ENCODE measurements at regions of chr2 and their contacts with region 1.

Region 1: DNA sequence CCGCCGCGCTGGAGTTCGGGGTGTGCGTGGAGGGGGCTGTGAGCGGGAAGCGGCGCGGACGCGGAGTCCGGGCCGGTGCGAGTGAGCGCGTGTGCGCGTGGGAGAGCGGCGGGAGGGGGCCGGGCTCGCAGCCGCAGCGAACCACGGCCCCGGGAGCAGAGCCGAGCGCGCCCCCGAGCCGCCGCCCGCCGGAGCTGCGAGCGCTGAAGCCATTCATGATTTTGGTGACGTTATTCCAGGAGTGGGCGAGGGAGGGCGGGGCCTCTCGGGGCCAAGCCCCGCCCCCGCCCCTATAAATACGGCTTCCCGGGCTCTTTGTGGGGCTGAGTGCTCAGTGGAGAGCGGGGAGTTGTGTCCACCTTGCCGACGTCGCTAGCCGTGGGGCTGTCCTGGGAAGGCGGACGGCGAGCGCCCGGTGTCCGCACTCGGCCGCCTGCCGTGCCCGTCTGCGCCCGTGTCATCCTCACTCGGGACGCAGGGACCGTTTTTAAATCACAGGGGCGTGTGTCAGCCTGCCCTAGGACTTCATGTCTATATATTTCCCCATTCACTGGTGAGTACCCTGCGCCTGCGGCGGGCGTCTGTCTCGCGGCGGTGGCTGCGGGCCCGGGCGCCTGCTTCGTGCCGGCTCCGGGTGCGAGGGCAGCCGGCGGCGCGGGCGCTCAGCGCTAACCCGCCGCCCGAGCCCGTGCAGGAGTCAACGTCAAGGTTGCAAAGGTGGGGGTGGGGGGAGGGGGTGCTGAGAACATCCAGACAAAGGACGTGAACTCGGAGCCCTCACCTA is at the start of gene LBH:
- DNase-seq: peak; percentile 87 to 88
- ATAC-seq: peak; percentile 59 to 68
- H3K4me3 ChIP-seq: peak within 1 kb of the TSS; percentile 97
- H3K27ac ChIP-seq: peak within 1 kb of the TSS; percentile 92 to 94
- H3K4me1 ChIP-seq: peaks cover 33% of the 10 kb centered on the region
- CTCF ChIP-seq: 0 out of 3 replicates have a peak, but pooled peaks have one; percentile 11
- EP300 ChIP-seq: no peak
- POLR2A ChIP-seq: peak; percentile 100
- RAD21 ChIP-seq: 0 out of 5 replicates have a peak, but pooled peaks of 1 of the 2 experiments have one; percentile 21
- polyA plus RNA-seq, gene LBH: 149 and 163 TPM in 2 replicates

Region 2: DNA sequence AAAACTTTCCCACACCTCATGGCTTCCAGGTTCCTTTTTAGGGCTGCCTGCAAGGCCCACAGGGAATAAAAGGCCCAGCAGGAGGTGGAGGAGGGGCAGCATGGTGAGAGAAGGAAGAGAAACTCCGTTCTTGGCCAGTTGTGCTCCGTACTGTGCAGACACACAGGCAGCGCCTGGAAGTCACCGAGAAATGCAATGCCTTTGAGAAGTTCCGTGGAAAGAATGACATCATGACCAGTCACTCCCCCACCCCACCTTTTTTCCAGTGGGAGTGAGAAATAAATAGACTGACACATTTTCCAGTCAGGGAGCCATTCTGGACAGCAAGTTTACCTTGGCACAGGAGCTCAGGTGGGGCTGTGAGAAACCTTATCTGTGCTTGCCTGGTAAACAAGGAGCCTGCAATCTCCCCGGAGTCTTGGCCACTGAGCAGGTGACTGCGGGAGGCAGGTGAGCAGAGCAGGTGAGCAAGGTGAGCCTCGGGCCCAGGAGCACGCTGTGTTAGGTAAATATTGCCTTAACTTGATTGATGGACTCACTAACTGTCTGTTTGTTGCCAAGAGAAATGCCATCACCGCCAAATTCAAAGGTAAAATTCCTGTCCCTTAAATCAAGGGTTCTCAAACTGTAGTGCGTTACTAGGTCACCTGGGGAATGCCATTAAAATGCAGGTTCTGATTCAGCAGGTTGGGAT is 13.6 kb before region 1 on chr2:
- CTCF ChIA-PET with region 1: interaction called, 8 read pairs
- POLR2A ChIA-PET with region 1: interaction called, 11 read pairs
- DNase-seq: no peak
- ATAC-seq: no peak
- H3K4me3 ChIP-seq: no peak overlapping the region
- H3K27ac ChIP-seq: no peak overlapping the region
- H3K4me1 ChIP-seq: no peaks in the 10 kb centered on the region; the same call in 2 of the 3 replicates
- CTCF ChIP-seq: no peak
- EP300 ChIP-seq: no peak
- POLR2A ChIP-seq: no peak
- RAD21 ChIP-seq: no peak

Region 3: DNA sequence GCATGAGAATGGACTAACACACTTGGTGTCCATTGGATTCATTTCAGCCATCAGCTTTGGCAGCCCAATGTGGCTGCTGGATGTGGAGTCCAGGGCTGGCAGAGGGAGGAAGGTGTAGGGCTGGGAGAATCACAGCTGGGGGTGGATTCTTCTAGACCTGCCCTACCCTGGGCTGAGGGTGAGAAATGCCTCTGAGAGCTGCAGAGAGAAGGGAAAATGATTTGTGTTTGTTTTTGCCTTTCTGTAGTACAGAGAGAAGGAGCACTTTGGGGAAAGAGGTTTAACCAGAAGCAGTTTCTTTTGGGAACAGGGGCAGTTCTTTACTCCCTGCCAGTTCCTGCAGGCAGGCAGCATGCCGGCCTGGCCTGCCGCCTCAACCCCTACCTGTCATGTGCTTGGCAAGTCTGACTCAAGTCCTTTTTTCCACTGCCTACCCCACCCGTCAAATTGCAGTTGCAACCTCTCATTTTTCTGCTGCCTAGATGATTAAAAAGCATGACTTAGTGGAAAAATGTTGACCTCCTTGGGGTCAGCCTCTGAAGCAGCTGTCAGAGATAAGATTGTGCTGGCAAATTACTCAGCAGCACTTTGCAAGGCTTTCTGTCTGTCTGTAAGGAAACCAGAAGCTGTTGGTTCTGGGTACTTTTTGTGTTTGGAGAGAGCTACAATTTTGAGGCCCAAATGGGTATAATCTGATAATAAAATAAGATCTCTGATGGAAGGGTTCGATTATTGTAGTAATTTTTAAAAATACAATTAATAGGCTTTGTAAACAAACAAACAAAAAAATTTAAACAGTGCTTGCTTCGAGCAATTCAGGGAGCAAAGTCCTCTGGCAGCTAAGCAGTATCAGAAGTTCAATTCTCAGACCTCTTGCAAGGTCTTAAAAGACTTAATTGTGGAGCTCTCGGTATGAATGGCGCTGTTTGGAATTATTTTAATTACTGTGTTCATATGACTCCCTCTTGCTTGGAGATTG is 21.6 kb after region 1 on chr2:
- CTCF ChIA-PET with region 1: interaction called, 135 read pairs
- POLR2A ChIA-PET with region 1: interaction called, 8 read pairs
- DNase-seq: peak; percentile 67 to 87
- ATAC-seq: peak; percentile 75 to 87
- H3K4me3 ChIP-seq: peak overlapping the region; percentile 12; the same call in 1 of the 3 replicates
- H3K27ac ChIP-seq: peak overlapping the region; percentile 78 to 83
- H3K4me1 ChIP-seq: peaks cover 80% of the 10 kb centered on the region
- CTCF ChIP-seq: no peak
- EP300 ChIP-seq: peak; percentile 37 to 67; a peak in 2 of 5 replicates
- POLR2A ChIP-seq: no peak
- RAD21 ChIP-seq: peak in 1 of 2 experiments; percentile 11; a peak in 2 of 5 replicates

Region 4: DNA sequence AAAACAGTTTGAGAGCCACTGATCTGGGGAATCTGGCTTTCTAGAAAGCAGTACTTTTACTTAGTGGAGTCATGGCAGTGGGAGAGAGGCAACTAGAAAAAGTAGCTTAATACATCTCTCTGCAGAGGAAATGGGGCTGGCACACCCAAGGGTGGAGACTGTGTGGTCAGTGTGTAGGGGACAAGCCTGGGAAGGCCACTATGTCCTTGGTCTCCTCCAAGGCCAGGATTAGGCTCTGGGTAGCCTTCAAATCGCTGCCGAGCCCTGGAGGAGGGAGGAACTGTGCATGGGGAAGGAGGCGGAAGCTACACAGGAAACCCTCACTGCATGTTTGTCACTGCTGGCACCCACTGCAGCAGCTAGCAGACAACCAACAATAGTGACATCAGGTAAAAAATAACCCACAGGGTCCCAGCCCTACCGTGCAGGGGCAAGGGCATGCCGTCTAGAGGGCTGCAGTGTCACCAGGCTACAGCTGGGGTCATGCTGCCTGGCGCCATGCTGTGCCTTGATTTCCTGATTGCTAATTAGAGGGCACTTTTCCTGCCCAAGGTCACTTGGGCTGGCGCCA is 34.7 kb after region 1 on chr2:
- CTCF ChIA-PET with region 1: interaction called, 39 read pairs
- POLR2A ChIA-PET with region 1: interaction called, 11 read pairs
- DNase-seq: no peak
- ATAC-seq: peak in 1 of 2 experiments; percentile 5; a peak in 2 of 6 replicates
- H3K4me3 ChIP-seq: no peak overlapping the region
- H3K27ac ChIP-seq: peak overlapping the region; percentile 53 to 68
- H3K4me1 ChIP-seq: peaks cover 33% of the 10 kb centered on the region
- CTCF ChIP-seq: no peak
- EP300 ChIP-seq: no peak
- POLR2A ChIP-seq: no peak
- RAD21 ChIP-seq: no peak

Region 5: GRCh38 chr2:30273261-30273861 is 42.0 kb after region 1 on chr2:
- CTCF ChIA-PET with region 1: interaction called, 39 read pairs
- POLR2A ChIA-PET with region 1: interaction called, 70 read pairs
- DNase-seq: peak; percentile 44 to 91
- ATAC-seq: peak; percentile 28 to 53; a peak in 4 of 6 replicates
- H3K4me3 ChIP-seq: no peak overlapping the region
- H3K27ac ChIP-seq: peak overlapping the region; percentile 82 to 91
- H3K4me1 ChIP-seq: peaks cover 62% of the 10 kb centered on the region
- CTCF ChIP-seq: no peak
- EP300 ChIP-seq: peak; percentile 34 to 77; a peak in 3 of 5 replicates
- POLR2A ChIP-seq: no peak
- RAD21 ChIP-seq: peak; percentile 7 to 34; a peak in 3 of 5 replicates

Region 6: GRCh38 chr2:30300456-30301221 is 69.2 kb after region 1 on chr2:
- CTCF ChIA-PET with region 1: no interaction called
- POLR2A ChIA-PET with region 1: interaction called, 17 read pairs
- DNase-seq: peak; percentile 21 to 83
- ATAC-seq: peak; percentile 64 to 81
- H3K4me3 ChIP-seq: no peak overlapping the region
- H3K27ac ChIP-seq: peak overlapping the region; percentile 80 to 88
- H3K4me1 ChIP-seq: peaks cover 45% of the 10 kb centered on the region
- CTCF ChIP-seq: no peak
- EP300 ChIP-seq: peak; percentile 71 to 94; a peak in 4 of 5 replicates
- POLR2A ChIP-seq: no peak
- RAD21 ChIP-seq: peak in 1 of 2 experiments; percentile 0; a peak in 2 of 5 replicates

Region 7: GRCh38 chr2:30421604-30422443 is 190.4 kb after region 1 on chr2:
- CTCF ChIA-PET with region 1: no interaction called
- POLR2A ChIA-PET with region 1: interaction called, 14 read pairs
- DNase-seq: no peak
- ATAC-seq: peak; percentile 59 to 75
- H3K4me3 ChIP-seq: no peak overlapping the region
- H3K27ac ChIP-seq: peak overlapping the region; percentile 55 to 62; a peak in 5 of 6 replicates
- H3K4me1 ChIP-seq: peaks cover 22% of the 10 kb centered on the region
- CTCF ChIP-seq: no peak
- EP300 ChIP-seq: no peak
- POLR2A ChIP-seq: no peak
- RAD21 ChIP-seq: no peak